ENCODE measurements at regions of chr12 and their contacts with region 1.

Region 1: DNA sequence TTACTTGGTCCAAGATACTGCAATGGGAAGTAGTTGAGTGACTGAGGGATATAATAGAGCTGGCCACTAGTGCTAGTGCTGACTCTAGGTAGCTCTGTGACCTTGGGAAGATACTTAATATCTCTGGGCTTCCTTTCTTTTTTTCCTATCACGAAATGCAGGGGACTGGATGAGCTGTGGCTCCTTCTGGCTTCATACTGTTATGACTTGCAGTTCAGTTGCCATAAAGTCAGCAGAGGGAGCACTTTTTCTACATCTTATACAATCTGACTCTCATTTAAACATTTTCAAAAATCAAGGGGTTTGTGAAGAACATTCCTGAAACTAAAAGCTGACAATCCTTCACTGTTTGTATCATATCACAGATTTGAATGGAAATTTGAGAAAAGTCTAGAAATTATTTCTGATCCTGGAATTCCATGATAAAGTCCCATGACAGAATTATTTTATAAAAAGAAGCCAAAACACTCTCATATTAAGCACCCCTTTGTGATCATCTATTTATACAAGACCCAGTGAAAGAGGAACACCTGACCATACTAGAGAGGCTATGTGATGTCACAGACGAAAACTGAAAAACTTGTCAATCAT is 5.4 kb downstream of the BHLHE41 start:
- DNase-seq: peak; percentile 78
- ATAC-seq: peak; percentile 25; the same call in 1 of the 2 replicates
- H3K4me3 ChIP-seq: no peak overlapping the region
- H3K27ac ChIP-seq: no peak overlapping the region
- H3K4me1 ChIP-seq: no peaks in the 10 kb centered on the region
- H3K27me3 ChIP-seq: peaks cover 3% of the 10 kb centered on the region
- CTCF ChIP-seq: peak; percentile 69
- POLR2A ChIP-seq: no peak
- RAD21 ChIP-seq: peak; percentile 71

Region 2: GRCh38 chr12:25677232-25677937 is 442.1 kb before region 1 on chr12:
- CTCF ChIA-PET with region 1: no interaction called
- POLR2A ChIA-PET with region 1: no interaction called
- dilution Hi-C with region 1: no loop called
- in situ Hi-C with region 1: no loop called
- intact Hi-C with region 1: no loop called
- DNase-seq: no peak
- ATAC-seq: no peak
- H3K4me3 ChIP-seq: no peak overlapping the region
- H3K27ac ChIP-seq: no peak overlapping the region
- H3K4me1 ChIP-seq: peaks cover 2% of the 10 kb centered on the region
- H3K27me3 ChIP-seq: no peaks in the 10 kb centered on the region
- CTCF ChIP-seq: no peak
- POLR2A ChIP-seq: no peak
- RAD21 ChIP-seq: no peak

Region 3: GRCh38 chr12:26274441-26275312 is 155.2 kb after region 1 on chr12:
- CTCF ChIA-PET with region 1: no interaction called
- POLR2A ChIA-PET with region 1: no interaction called
- dilution Hi-C with region 1: no loop called
- in situ Hi-C with region 1: no loop called
- intact Hi-C with region 1: loop called (anchors 1 kb)
- DNase-seq: peak; percentile 100
- ATAC-seq: peak; percentile 96
- H3K4me3 ChIP-seq: no peak overlapping the region
- H3K27ac ChIP-seq: peak overlapping the region; percentile 80
- H3K4me1 ChIP-seq: peaks cover 18% of the 10 kb centered on the region
- H3K27me3 ChIP-seq: no peaks in the 10 kb centered on the region
- CTCF ChIP-seq: 0 out of 2 replicates have a peak, but pooled peaks have one; percentile 16
- POLR2A ChIP-seq: no peak; the same call in 1 of the 2 replicates
- RAD21 ChIP-seq: peak; percentile 31; the same call in 1 of the 2 replicates

Region 4: GRCh38 chr12:26416550-26416949 is 297.1 kb after region 1 on chr12:
- CTCF ChIA-PET with region 1: no interaction called
- POLR2A ChIA-PET with region 1: no interaction called
- dilution Hi-C with region 1: no loop called
- in situ Hi-C with region 1: no loop called
- intact Hi-C with region 1: no loop called
- DNase-seq: no peak
- ATAC-seq: no peak
- H3K4me3 ChIP-seq: no peak overlapping the region
- H3K27ac ChIP-seq: no peak overlapping the region
- H3K4me1 ChIP-seq: no peaks in the 10 kb centered on the region
- H3K27me3 ChIP-seq: no peaks in the 10 kb centered on the region
- CTCF ChIP-seq: no peak
- POLR2A ChIP-seq: no peak
- RAD21 ChIP-seq: no peak

Region 5: DNA sequence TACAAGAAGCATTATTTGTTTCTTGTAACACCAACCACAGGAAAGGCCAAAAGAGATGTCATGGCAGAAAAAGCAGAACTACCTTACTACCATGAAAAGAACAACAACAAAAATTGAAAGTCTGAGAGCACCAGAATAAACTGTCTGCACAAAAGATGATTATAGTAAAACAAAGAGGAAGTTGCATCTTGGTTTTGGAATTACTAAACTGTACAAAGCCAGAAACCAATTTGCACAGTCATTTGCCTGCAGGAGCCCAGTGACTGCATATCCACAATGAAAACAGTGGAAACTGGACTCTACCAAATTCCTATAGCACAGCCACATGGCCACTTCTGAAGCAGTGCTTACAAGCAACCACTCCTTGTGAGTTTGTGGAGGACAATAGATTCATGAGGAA is 352.1 kb after region 1 on chr12:
- CTCF ChIA-PET with region 1: interaction called, 6 read pairs
- POLR2A ChIA-PET with region 1: no interaction called
- dilution Hi-C with region 1: no loop called
- in situ Hi-C with region 1: no loop called
- intact Hi-C with region 1: loop called (anchors 5 kb)
- DNase-seq: peak; percentile 68
- ATAC-seq: peak; percentile 73
- H3K4me3 ChIP-seq: no peak overlapping the region
- H3K27ac ChIP-seq: no peak overlapping the region
- H3K4me1 ChIP-seq: no peaks in the 10 kb centered on the region
- H3K27me3 ChIP-seq: no peaks in the 10 kb centered on the region
- CTCF ChIP-seq: no peak
- POLR2A ChIP-seq: no peak
- RAD21 ChIP-seq: no peak; the same call in 1 of the 2 replicates

Measured in IMR-90 (cell line).